ENCODE measurements at regions of chr11 and their contacts with region 1.

Region 1: DNA sequence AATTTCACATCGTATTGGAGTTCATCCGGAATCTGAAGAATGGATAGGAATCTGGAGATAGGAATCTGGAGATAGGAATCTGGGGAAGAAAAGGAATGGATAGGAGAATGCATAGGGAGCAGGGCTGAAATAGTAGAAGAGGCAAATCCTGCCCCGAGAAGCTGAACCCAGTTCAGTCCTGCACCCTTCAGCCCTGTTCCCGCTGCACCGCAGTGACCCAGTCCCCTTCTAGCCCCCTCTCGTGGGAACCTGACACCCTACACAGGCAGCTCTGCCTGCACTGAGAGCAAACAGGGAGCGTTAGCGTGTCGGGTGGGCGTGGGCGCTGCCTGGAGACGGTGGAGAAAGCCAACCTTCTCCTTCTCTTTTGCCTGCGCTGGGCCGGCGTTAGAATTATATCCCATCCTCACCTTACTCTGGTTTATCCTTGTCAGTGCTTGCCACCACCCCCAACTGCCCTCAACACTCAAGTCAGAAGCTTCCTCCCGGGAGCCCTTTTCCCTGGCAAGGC is 1.0 kb upstream of the CCKBR start:
- DNase-seq: peak in 8 of 10 donors; percentile 43 to 93 (median 63)

Region 2: DNA sequence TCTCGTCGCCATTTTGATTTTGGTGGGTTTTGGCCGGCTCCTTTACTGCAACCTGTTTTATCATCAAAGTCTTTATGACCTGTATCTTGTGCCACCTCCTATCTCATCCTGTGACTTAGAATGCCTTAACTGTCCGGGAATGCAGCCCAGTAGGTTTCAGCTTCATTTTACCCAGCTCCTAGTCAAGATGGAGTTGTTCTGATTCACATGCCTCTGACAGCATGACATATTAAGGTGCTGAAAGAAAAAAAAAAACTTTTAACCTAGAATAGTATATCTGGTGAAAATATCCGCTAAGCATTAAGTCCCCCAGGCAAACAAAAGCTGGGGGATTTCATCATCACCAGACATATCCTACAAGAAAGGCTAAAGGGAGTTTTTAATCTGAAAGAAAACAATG is 97.5 kb before region 1 on chr11:
- intact Hi-C with region 1: no loop called
- DNase-seq: no peak

Region 3: DNA sequence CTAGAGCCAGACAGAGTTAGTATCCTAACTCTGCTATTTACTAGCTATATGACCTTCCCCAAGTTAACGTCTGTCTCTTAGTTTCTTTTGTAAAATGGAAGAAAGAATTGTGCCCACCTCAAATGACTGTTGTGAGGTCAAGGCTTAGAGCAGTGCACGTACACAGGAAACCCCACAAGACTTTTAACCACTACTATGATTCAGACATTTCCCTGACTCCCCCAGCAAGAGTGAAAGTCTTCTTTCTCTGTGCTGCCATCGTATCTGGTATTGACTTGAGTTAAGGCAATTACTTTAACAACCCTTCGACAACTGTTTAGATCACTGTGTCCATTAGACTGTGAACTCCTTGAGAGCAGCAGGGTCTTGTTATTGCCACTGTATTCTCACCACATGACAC is 62.2 kb before region 1 on chr11:
- intact Hi-C with region 1: no loop called
- DNase-seq: no peak

Region 4: DNA sequence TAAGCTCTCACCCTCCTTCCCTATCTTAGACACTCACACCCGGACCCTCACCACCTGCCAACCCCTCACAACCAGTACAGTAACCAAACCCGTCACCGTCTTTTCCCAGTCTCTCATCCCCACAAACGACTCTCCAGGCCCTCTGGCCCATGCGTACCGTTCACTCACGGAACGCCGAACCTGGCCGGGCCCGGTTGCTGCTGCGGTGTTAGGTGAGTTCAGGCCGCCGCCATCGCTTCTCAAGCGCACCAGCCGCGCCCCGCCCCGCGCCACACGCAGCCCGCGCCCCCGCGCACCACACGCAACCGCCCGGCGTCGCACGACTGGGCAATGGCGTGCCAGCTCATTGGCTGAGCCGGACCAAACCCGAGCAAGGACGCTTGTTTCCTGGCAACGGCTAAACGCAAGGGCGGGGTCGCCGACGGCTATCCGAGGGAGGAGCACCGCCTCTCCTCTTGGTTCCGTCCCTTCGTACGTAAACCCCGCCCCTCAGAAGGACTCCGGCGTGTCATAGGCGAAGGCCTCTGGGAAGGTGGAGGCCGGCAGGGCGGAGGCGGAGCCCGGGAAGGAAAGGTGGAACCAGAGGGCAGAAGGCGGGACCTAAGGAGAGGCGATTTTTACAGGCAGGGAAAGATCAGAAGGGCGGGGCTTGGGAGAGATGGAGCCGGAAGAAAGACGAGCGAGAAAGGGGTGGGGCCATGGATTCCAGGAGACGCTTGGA is 24.1 kb before region 1 on chr11 and contains the start of gene FHIP1B:
- intact Hi-C with region 1: loop called (anchors 1 kb)
- DNase-seq: peak; percentile 99 to 100 (median 100)

Region 5: GRCh38 chr11:6269994-6270393 is 11.4 kb after region 1 on chr11:
- intact Hi-C with region 1: no loop called
- DNase-seq: peak in 2 of 10 donors; percentile 64 to 69

Region 6: DNA sequence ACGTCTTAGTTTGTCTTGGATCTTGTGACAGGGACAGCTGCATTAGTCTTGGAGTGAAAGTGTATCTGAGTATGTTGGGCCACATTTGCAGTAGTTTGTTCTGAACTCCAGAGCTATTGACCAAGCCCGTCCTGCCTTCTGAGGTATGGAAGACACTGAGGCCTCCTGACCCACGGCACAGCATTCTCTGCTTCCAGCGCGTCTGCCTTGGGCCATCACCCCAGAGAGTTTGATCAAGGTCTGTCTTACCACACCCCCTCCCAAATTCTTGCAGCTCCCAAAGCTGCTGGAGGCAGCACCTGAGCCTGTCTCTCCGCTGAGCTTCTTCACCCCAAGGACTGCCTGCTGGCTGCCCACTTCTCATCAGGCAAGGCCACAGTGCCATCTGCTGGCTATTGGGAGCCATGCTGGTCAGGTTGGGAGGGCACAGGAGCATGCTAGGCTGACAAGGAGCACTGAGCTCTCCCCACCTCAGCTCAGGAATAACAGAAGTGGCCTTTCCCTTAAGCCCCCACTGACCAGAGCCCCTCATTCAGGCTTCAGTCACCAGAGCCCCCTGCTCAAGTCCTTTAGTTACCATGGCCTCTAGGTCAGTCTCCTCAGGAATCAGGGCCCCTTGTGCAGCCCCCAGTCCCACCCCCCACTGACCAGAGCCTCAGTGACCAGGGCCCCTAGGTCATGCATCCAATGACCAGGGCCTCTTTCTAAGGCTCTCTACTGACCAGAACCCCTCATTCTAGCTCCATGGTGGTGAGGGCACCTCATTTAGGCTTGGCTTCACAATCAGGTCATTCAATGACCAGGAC is 104.5 kb after region 1 on chr11:
- intact Hi-C with region 1: no loop called
- DNase-seq: peak; percentile 66 to 96 (median 84)

Measured in posterior cingulate gyrus (tissue), 11 donors.